Heart right ventricle (tissue), 16 donors: ENCODE measurements at regions of chr18 and their contacts with region 1.

Region 1: GRCh38 chr18:25005541-25006403 is 346.2 kb downstream of the ZNF521 start:
- DNase-seq: no peak
- ATAC-seq: peak in 4 of 8 donors; percentile 31 to 85 (median 45)
- H3K4me3 ChIP-seq: no peak overlapping the region
- H3K27ac ChIP-seq: no peak overlapping the region
- H3K4me1 ChIP-seq: peaks cover 0 to 12% (median 7%) of the 10 kb centered on the region in 9 donors
- H3K27me3 ChIP-seq: no peaks in the 10 kb centered on the region
- CTCF ChIP-seq: no peak

Region 2: DNA sequence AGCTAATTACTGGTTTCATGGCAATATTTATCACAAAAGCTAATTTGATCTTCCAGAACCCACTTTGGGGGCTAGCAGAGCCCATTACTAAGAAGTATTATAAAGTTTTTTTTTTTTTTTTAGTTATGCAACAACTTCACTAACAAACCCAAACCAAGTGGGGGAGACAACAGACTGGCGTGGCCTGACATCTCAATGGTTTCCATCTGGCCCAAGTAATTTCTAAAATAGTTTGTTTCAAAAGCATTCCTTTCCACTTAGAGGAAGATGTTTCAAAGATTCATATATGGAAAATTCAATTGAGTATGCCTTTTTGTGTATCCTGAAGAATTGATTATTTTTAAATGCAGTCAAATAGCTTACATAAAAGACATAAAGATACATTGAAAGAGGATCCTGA is 178.3 kb before region 1 on chr18:
- intact Hi-C with region 1: no loop called
- DNase-seq: no peak
- ATAC-seq: no peak
- H3K4me3 ChIP-seq: no peak overlapping the region
- H3K27ac ChIP-seq: no peak overlapping the region
- H3K4me1 ChIP-seq: no peaks in the 10 kb centered on the region
- H3K27me3 ChIP-seq: peaks cover 0 to 11% (median 0%) of the 10 kb centered on the region in 7 donors
- CTCF ChIP-seq: no peak

Region 3: DNA sequence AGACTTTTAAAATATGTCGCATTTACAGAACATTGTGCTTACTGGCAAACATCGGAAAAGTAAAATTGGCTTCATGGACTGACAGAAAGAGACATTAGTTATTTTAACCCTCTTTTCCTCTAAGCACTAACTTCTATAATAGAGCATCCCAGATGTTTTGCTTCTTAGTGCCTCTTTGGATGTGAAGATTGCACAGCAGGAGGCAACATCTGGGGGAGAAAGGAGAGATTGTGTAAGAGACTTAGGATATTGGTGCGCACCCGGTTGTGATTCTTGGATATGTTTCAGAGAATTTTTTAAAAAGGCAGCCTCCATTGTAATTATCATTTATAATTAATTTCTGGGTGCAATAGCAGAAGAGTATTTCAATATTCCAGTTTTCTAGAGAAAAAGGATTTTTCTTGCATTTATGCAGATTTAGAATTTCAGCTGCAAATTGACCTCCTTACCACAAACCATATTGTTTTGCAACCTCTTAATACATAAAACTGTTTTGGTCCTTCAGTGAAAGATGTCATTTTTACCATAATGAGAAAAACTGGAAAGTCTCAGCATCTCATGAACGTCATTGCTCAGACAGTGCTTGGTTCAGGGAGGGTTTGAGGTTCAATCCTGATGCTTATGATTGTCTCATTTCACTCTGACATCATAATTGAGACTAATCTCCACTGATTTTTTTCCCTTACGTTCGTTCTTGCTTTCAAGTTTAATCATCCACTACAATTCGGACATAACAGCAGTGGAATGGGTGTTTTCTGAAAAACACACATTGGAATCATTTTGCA is 58.1 kb before region 1 on chr18:
- intact Hi-C with region 1: loop called in 2 of 10 experiments (anchors 10 kb)
- DNase-seq: no peak
- ATAC-seq: peak in 6 of 8 donors; percentile 46 to 79 (median 72)
- H3K4me3 ChIP-seq: no peak overlapping the region
- H3K27ac ChIP-seq: peak overlapping the region in 2 of 10 donors; percentile 39 to 45
- H3K4me1 ChIP-seq: no peaks in the 10 kb centered on the region
- H3K27me3 ChIP-seq: no peaks in the 10 kb centered on the region
- CTCF ChIP-seq: no peak

Region 4: DNA sequence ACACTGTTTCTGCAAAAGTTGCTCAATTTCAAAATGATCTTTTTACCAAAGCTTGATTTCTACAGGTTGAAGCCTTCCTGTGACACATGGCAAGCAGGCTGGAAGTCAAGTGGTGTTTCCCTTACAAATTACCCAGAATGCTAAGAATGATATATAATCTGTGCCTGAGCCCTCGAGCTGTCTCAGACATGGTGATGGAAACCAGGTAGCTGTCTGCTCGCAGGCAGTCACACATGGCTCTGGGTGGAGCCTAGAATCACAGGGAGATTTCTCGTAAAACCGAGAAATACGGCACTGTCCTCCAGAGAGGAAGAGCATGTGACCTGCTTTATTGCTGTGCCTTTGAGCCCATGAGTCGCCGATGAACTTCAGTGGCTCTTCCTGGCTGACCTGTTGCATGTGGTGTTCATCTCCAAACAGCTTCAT is 46.7 kb before region 1 on chr18:
- intact Hi-C with region 1: loop called in 1 of 10 experiments (anchors 10 kb)
- DNase-seq: no peak
- ATAC-seq: no peak
- H3K4me3 ChIP-seq: no peak overlapping the region
- H3K27ac ChIP-seq: no peak overlapping the region
- H3K4me1 ChIP-seq: peaks cover 0 to 5% (median 0%) of the 10 kb centered on the region in 9 donors
- H3K27me3 ChIP-seq: no peaks in the 10 kb centered on the region
- CTCF ChIP-seq: no peak

Region 5: GRCh38 chr18:25125680-25126079 is 119.9 kb after region 1 on chr18:
- intact Hi-C with region 1: no loop called
- DNase-seq: no peak
- ATAC-seq: no peak
- H3K4me3 ChIP-seq: no peak overlapping the region
- H3K27ac ChIP-seq: no peak overlapping the region
- H3K4me1 ChIP-seq: peaks cover 0 to 25% (median 9%) of the 10 kb centered on the region in 9 donors
- H3K27me3 ChIP-seq: no peaks in the 10 kb centered on the region
- CTCF ChIP-seq: no peak

Region 6: DNA sequence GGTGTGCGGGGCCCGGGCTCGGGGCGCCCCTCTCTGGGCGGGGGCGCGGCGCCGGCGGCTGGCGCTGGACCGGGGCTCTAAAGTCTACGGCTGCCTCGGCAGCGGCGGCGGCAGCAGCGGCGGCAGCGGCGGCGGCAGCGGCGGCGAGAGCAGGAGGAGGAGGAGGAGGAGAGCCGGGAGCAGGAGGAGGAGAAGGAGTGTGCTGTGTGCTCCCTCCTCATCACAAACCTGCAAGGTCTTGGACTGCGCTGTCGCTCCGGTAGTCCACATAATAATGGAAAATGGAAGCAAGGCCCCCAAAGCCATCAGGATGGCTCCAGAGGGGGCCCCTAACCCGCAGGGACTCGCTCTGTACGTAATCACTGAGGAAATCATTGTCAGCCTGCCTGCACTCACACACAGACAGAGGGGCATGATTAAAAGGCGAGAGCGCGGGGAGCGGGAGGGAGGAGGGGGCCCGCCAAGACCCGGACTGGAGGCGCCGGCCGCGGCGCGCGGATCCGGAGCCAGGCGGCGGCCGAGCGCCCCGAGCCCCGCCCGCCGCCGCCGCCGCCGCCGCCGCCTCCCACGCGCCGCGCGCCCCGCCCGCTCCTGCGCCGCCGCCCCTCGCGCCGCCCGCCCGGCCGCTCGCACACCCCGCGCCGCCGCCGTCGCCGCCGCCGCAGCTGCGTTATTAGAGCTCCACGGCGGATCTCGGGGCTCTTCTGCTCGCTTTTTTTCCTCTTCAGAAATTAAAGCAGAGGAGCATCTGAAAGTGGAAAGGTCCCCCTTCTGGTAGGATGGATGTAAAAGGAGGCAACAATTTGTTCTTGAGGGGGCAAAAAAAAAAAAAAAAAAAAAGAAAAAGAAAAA is 346.2 kb after region 1 on chr18 and contains the start of gene ZNF521:
- intact Hi-C with region 1: no loop called
- DNase-seq: peak; percentile 86
- ATAC-seq: peak; percentile 75 to 93 (median 86)
- H3K4me3 ChIP-seq: peak within 1 kb of the TSS; percentile 68 to 91 (median 79)
- H3K27ac ChIP-seq: peak within 1 kb of the TSS; percentile 91 to 97 (median 94)
- H3K4me1 ChIP-seq: peaks cover 3 to 29% (median 15%) of the 10 kb centered on the region in 9 donors
- H3K27me3 ChIP-seq: peaks cover 0 to 78% (median 0%) of the 10 kb centered on the region in 7 donors
- CTCF ChIP-seq: peak in 7 of 9 donors; percentile 13 to 48 (median 31)
- total RNA-seq, gene ZNF521: 10.5 to 26.4 (median 15.9) TPM